CD8-positive, alpha-beta T cell (primary cell): ENCODE measurements at regions of chr1 and their contacts with region 1.

Region 1: GRCh38 chr1:59468828-59469428 is 172.0 kb downstream of the FGGY start:
- DNase-seq: no peak
- ATAC-seq: no peak
- H3K4me3 ChIP-seq: no peak overlapping the region
- H3K4me3 Mint-ChIP-seq: no peak overlapping the region
- H3K27ac ChIP-seq: no peak overlapping the region
- H3K27ac Mint-ChIP-seq: no peak overlapping the region
- H3K4me1 ChIP-seq: no peaks in the 10 kb centered on the region
- H3K4me1 Mint-ChIP-seq: peaks cover 3% of the 10 kb centered on the region
- H3K27me3 ChIP-seq: no peaks in the 10 kb centered on the region
- H3K27me3 Mint-ChIP-seq: no peaks in the 10 kb centered on the region
- CTCF ChIP-seq: no peak

Region 2: GRCh38 chr1:59446257-59446901 is 22.5 kb before region 1 on chr1:
- CTCF ChIA-PET with region 1: no interaction called
- POLR2A ChIA-PET with region 1: no interaction called
- intact Hi-C with region 1: loop called in 1 of 2 experiments (anchors 1 kb)
- DNase-seq: no peak
- ATAC-seq: no peak
- H3K4me3 ChIP-seq: no peak overlapping the region
- H3K4me3 Mint-ChIP-seq: no peak overlapping the region
- H3K27ac ChIP-seq: no peak overlapping the region
- H3K27ac Mint-ChIP-seq: no peak overlapping the region
- H3K4me1 ChIP-seq: no peaks in the 10 kb centered on the region
- H3K4me1 Mint-ChIP-seq: no peaks in the 10 kb centered on the region
- H3K27me3 ChIP-seq: no peaks in the 10 kb centered on the region
- H3K27me3 Mint-ChIP-seq: no peaks in the 10 kb centered on the region
- CTCF ChIP-seq: no peak

Region 3: GRCh38 chr1:59788825-59789224 is 319.9 kb after region 1 on chr1:
- CTCF ChIA-PET with region 1: no interaction called
- POLR2A ChIA-PET with region 1: no interaction called
- intact Hi-C with region 1: no loop called
- DNase-seq: no peak
- ATAC-seq: no peak
- H3K4me3 ChIP-seq: no peak overlapping the region
- H3K4me3 Mint-ChIP-seq: no peak overlapping the region
- H3K27ac ChIP-seq: no peak overlapping the region
- H3K27ac Mint-ChIP-seq: no peak overlapping the region
- H3K4me1 ChIP-seq: no peaks in the 10 kb centered on the region
- H3K4me1 Mint-ChIP-seq: peaks cover 2% of the 10 kb centered on the region
- H3K27me3 ChIP-seq: no peaks in the 10 kb centered on the region
- H3K27me3 Mint-ChIP-seq: no peaks in the 10 kb centered on the region
- CTCF ChIP-seq: no peak